ENCODE measurements at regions of chr15 and their contacts with region 1.

Region 1: GRCh38 chr15:100338971-100339444 is 2.8 kb downstream of the ADAMTS17 start:
- DNase-seq: peak; percentile 48
- H3K4me3 ChIP-seq: no peak overlapping the region
- H3K27ac ChIP-seq: no peak overlapping the region
- H3K4me1 ChIP-seq: no peaks in the 10 kb centered on the region
- H3K27me3 ChIP-seq: peaks cover 10% of the 10 kb centered on the region
- CTCF ChIP-seq: peak; percentile 57

Region 2: GRCh38 chr15:99931703-99932603 is 407.1 kb before region 1 on chr15:
- CTCF ChIA-PET with region 1: interaction called, 5 read pairs
- POLR2A ChIA-PET with region 1: no interaction called
- intact Hi-C with region 1: loop called (anchors 5 kb)
- DNase-seq: no peak
- H3K4me3 ChIP-seq: no peak overlapping the region
- H3K27ac ChIP-seq: no peak overlapping the region
- H3K4me1 ChIP-seq: no peaks in the 10 kb centered on the region
- H3K27me3 ChIP-seq: peaks cover 3% of the 10 kb centered on the region
- CTCF ChIP-seq: no peak

Measured in A673 (cell line).